RWPE1 (cell line): ENCODE measurements at regions of chr9 and their contacts with region 1.

Region 1: DNA sequence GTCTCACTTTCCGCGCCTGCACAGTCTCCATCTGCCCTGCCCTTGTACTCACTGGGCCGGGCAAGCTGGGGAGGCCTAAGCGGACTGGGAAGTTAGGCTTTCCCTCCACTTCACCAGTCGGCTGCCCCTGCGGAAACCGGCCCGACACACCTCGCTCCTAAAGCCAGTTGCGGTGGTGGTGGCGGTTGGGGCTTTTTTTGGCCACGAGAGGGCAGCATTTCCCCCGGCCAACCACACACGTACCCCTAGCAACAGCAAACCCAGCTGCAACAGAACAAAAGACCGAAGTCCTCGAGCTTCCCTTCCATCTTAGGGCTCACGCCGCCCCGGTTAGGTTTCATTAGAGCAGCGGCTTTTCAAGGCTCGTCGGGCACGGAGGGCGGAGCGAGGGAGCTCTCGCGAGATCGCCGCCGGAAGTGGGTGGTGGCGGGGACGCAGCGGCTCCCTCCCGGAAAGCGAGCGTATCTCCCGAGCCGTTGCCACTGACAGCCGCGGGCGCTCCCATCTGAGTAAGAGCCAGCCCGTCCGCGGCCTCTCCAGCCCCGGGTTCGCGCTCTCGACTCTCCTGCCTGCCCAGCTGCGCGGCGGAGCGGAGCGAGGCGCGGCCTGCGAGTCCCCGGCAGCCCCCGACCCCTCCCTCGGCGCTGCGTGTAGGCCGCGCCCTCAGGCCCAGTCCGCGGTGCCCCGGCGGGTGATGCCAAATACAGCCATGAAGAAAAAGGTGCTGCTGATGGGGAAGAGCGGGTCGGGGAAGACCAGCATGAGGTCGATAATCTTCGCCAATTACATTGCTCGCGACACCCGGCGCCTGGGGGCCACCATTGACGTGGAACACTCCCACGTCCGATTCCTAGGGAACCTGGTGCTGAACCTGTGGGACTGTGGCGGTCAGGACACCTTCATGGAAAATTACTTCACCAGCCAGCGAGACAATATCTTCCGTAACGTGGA is at the start of gene RRAGA:
- DNase-seq: peak; percentile 95
- H3K27ac ChIP-seq: peak within 1 kb of the TSS; percentile 98
- CTCF ChIP-seq: peak; percentile 98

Region 2: DNA sequence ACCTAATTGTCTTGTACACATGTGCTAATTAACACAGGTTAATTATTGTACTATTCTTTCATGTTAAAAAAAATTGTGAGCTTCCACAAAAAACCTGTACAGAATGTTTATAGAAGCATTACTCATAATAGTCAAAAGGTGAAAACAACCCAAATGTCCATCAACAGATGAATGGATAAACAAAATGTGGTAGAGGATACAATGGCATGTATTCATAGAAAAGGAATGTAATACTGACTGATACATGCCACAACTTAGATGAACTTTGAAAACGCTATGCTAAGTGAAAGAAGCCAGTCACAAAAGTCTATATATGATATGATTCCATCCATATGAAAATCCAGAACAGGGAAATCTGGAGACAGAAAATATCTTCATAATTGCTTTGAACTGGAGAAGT is 25.6 kb after region 1 on chr9:
- CTCF ChIA-PET with region 1: no interaction called
- POLR2A ChIA-PET with region 1: no interaction called
- DNase-seq: peak; percentile 22
- H3K27ac ChIP-seq: no peak overlapping the region
- CTCF ChIP-seq: no peak

Region 3: DNA sequence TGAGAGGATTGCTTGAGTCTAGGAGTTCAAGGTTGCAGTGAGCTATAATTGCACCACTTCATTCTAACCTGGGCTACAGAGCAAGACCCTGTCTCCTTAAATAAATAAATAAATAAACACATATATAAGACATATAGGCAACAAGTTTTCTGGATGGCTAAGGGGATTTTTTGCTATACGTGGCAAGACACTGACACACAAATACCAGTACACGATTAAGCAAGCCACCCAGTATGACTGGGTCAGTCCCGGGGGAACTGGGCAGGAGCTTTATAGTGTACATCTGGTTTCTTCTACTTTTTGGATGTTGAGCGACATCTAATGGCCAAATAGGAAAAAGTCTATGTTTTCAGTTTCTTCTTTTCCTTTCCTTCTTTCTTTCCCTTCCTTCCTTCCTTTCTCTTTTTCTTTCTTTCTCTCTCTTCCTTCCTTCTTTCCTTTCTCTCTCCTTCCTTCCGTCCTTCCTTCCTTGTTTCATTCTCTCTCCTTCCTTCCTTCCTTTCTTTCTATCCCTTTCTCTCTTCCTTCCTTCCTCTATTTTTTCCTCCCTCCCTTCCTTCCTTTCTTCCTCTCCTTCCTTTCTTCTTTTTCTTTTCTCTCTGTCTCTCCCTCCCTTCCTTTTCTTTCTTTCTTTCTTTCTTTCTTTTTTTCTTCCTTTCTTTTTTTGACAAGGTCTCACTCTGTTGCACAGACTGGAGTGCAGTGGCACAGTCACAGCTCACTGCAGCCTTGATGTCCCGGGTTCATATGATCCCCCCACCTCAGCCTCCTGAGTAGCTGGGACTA is 125.1 kb after region 1 on chr9:
- CTCF ChIA-PET with region 1: interaction called, 12 read pairs
- POLR2A ChIA-PET with region 1: no interaction called
- DNase-seq: peak; percentile 82
- H3K27ac ChIP-seq: no peak overlapping the region
- CTCF ChIP-seq: peak; percentile 86